ENCODE measurements at regions of chr2 and their contacts with region 1.

Region 1: GRCh38 chr2:147910990-147911473 is 66.2 kb downstream of the ACVR2A start:
- DNase-seq: peak; percentile 48 to 78
- H3K4me3 ChIP-seq: no peak overlapping the region
- H3K4me1 ChIP-seq: peaks cover 6% of the 10 kb centered on the region; the same call in 1 of the 2 replicates
- H3K27me3 ChIP-seq: no peaks in the 10 kb centered on the region

Region 2: GRCh38 chr2:146734042-146734820 is 1176.8 kb before region 1 on chr2:
- in situ Hi-C with region 1: loop called (anchors 10 kb)
- DNase-seq: peak; percentile 26 to 76
- H3K4me3 ChIP-seq: no peak overlapping the region
- H3K4me1 ChIP-seq: no peaks in the 10 kb centered on the region; the same call in 1 of the 2 replicates
- H3K27me3 ChIP-seq: no peaks in the 10 kb centered on the region

Region 3: GRCh38 chr2:146917431-146918042 is 993.5 kb before region 1 on chr2:
- in situ Hi-C with region 1: loop called (anchors 25 kb)
- DNase-seq: no peak
- H3K4me3 ChIP-seq: no peak overlapping the region
- H3K4me1 ChIP-seq: no peaks in the 10 kb centered on the region
- H3K27me3 ChIP-seq: no peaks in the 10 kb centered on the region

Region 4: DNA sequence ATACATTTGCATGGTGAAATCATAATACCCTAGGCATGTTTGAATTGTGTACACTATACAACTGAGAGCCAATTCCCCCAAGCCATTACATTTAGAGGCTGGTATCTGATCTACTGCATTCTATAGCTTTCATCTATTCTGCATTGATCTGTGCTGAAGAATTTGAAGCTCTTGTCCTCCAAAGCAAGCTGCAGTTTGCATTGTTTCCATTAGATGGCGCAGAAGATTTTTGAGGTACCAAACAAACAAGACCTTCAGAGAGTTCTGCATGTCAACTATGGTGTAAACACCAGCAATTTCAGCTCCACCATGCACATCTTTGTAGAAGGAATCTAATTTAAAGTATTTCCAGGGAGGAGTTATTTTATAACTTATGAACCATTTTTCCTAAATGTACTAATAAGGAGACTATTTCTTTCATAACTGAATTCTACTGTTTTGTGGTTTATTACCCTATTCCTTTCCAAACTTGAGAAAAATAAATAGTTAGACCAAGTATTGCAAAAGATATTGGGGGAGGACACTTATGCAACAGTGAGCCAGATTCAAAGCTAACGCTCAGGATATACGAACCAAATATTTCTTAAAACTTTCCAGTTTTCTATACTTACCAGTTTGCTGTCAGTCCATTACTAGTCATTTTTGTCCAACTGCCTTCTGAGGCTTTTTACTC is 828.0 kb before region 1 on chr2:
- in situ Hi-C with region 1: loop called (anchors 25 kb)
- DNase-seq: peak; percentile 57 to 86
- H3K4me3 ChIP-seq: no peak overlapping the region
- H3K4me1 ChIP-seq: no peaks in the 10 kb centered on the region
- H3K27me3 ChIP-seq: no peaks in the 10 kb centered on the region